Head of caudate nucleus (tissue), 42 donors: ENCODE measurements at regions of chr2 and their contacts with region 1.

Region 1: DNA sequence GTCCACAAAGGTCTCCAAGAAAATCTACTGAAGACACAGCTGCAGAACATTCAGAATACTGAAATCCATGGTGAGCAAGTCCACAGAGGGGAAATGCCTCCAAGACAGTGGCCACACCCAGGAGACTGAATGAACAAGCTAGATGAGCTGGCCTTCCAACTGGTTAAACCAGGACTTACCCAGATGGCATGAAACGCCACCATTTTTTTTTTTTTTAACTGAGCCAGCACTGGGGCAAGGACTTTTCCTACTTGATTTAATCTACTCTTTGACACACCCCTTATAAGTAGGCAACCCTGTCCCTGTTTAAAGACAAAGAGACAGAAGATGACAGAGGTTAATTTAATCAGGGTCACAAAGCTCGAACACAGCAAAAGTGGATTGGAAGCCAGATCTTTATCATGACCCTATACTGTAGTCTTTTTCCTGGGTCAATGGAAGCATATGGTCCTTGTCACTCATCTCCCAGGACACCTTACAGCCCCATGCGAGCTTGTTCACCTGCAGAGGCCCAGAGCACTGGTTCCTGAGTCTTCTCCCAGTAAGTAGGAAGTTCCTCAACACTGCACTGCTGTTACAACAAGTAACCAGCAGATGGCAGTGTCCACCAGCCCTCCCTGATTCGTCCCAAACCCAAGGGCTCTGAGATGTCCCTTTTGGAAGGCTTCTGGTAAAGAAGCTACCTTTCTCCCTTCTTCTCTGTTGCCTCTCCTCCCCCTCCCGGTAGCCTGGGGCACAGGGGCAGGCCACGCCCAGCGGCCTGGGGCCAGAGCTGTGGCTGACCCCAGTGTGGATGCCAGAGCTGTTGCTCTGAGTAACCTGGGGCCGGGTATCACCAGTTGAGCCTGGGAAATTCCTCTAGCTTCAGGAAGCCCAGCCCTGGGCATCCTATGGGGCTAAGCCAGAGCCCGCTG is 5.6 kb upstream of the GDF7 start:
- DNase-seq: peak in 41 of 42 donors; percentile 28 to 89 (median 74)

Region 2: GRCh38 chr2:20781656-20782265 is 120.4 kb after region 1 on chr2:
- intact Hi-C with region 1: no loop called
- DNase-seq: peak in 5 of 42 donors; percentile 11 to 24 (median 13)

Region 3: GRCh38 chr2:20962939-20963557 is 301.7 kb after region 1 on chr2:
- intact Hi-C with region 1: loop called (anchors 2 kb)
- DNase-seq: peak; percentile 44 to 89 (median 78)